ENCODE measurements at regions of chr2 and their contacts with region 1.

Region 1: DNA sequence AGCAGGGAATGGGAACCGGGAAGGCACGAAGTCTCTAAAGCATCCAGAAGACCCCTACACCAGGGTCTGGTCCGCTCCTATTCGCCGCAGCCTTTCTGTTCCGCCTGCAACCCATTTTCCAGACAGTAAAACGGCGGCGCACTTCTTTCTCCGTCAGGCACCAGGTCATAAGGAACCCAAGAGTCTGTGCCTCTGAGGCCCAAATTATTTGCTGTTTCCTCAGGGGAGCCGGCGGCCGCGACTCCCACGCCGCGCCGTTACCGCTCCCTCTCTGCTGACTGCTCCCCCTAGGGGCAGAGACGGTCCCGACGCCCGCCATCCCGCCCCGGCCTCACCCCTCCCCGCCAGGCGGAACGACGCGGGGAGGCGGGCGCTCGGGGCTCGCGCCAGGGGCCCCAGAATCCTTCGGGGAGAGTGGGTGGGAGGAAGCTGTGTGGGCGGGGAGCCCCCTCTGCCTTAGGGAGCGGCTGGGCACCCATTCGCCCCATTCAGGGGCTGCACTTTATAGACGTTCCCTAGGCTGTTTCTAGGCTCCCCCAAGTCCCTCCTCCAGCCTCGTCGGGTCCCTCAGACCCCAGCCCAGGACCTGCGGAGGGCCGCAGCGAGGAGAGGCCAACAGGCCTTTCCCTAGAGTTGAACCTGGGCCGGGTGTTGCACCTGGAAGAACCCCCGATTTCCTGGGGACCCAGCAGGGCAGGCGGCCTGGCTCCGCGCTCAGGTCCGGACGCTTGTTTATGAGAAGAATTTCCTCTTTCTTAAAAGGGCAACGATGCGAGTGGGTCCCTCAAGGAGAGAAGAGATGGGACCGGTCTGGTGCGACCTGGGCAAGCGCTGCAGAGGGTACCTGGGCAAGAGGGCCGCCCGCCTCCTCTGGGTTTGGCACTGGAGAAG is 3.6 kb upstream of the CTDSP1 start:
- DNase-seq: peak; percentile 95
- ATAC-seq: peak; percentile 57
- H3K4me3 Mint-ChIP-seq: peak overlapping the region; percentile 97
- H3K27ac Mint-ChIP-seq: peak overlapping the region; percentile 98
- H3K4me1 Mint-ChIP-seq: peaks cover 24% of the 10 kb centered on the region
- H3K27me3 Mint-ChIP-seq: no peaks in the 10 kb centered on the region

Region 2: DNA sequence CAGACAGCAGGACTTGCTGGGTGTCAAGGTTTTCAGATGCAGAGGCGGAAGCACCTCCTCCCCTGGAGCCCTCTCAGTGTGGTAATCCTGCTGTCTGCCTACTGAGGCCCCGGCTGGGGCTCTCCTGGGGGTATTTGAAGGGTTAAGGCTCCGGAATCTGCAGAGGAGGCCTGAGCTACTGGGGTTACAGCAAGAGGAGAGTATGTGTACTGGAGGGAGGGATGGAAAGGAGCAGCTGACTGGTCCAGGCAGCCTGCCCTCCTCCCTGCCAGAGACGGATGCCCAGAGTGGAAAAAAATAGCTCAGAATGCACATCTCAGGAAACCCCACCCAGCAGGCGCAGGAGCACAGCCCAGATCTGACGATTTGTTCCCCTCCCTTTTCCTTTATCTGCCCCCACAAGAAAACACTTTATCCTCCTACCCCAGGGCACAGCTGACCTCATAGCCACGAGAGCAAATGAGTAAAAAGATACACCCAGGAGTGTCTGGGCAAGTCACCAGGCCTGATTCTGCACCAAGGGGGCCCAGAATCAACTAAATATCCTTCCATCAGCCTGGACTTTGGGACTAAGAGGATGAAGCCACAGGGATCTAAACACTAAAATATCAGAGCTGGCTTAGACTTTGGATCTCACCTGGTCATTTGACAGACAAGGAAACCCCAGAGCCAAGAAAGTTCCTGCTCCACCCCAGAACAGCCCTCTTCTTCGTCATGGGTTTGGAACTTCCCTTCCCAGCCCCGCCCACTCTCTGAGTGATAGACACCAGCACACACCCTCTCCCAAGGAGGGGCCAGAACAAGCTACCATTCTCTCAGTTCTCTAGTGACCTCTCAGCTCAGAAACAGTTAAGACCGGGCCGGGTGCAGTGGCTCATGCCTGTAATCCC is 109.2 kb before region 1 on chr2:
- POLR2A ChIA-PET with region 1: interaction called, 13 read pairs
- DNase-seq: peak; percentile 76
- ATAC-seq: peak; percentile 75
- H3K4me3 Mint-ChIP-seq: peak overlapping the region; percentile 92
- H3K27ac Mint-ChIP-seq: peak overlapping the region; percentile 96
- H3K4me1 Mint-ChIP-seq: peaks cover 59% of the 10 kb centered on the region
- H3K27me3 Mint-ChIP-seq: no peaks in the 10 kb centered on the region

Region 3: GRCh38 chr2:218367415-218368153 is 28.5 kb before region 1 on chr2:
- POLR2A ChIA-PET with region 1: interaction called, 12 read pairs
- DNase-seq: peak; percentile 82
- ATAC-seq: peak; percentile 96
- H3K4me3 Mint-ChIP-seq: peak overlapping the region; percentile 80
- H3K27ac Mint-ChIP-seq: peak overlapping the region; percentile 84
- H3K4me1 Mint-ChIP-seq: peaks cover 21% of the 10 kb centered on the region
- H3K27me3 Mint-ChIP-seq: peaks cover 13% of the 10 kb centered on the region

Region 4: GRCh38 chr2:218378053-218378452 is 18.0 kb before region 1 on chr2:
- POLR2A ChIA-PET with region 1: no interaction called
- DNase-seq: no peak
- ATAC-seq: no peak
- H3K4me3 Mint-ChIP-seq: no peak overlapping the region
- H3K27ac Mint-ChIP-seq: no peak overlapping the region
- H3K4me1 Mint-ChIP-seq: no peaks in the 10 kb centered on the region
- H3K27me3 Mint-ChIP-seq: peaks cover 6% of the 10 kb centered on the region

Region 5: DNA sequence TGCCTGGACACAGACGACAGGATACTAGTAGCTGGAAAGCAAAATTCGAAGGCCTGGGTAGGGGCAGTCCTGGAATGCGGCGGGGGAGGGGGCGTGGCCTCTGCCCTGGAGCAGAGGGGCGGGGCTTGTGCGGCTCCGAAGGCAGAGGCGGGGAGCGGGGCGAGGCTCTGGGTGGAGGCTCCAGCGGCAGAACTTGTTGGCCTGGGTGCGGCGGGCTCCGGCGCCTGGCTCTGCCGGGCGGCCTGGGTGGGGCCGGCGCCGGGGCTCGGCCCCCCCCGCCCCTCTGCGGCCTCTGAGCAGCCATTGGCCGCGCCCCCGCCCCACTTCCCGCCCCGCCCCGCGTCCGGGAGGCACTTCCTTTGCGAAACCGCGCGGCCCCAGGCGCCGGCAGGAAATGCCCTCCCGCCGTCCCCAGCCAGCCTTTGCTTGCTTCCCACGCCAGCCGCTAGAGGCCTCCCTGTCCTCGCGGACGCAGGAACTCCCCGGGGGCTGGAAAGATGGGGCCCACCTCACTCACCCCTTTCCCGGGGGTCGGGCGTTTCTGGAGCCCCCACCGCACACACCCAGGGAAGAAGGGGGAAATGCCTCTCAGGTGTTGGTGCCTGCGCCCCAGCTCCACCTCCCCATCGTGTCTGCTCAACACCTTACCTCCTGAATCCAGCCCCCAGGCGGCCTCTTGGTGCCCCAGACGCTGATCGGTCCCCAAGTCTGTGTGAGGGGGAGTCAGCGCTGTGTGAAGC is 10.3 kb after region 1 on chr2:
- POLR2A ChIA-PET with region 1: interaction called, 30 read pairs
- DNase-seq: peak; percentile 95
- ATAC-seq: peak; percentile 88
- H3K4me3 Mint-ChIP-seq: peak overlapping the region; percentile 84
- H3K27ac Mint-ChIP-seq: peak overlapping the region; percentile 89
- H3K4me1 Mint-ChIP-seq: peaks cover 39% of the 10 kb centered on the region
- H3K27me3 Mint-ChIP-seq: peaks cover 7% of the 10 kb centered on the region

Measured in activated naive CD8-positive, alpha-beta T cell treated with anti-CD3 and anti-CD28 coated beads, Interleukin-2, amount 10 ng/mL, durations not matched to agents 7 days and 5 days (primary cell).